ENCODE measurements at regions of chr5 and their contacts with region 1.

Region 1: DNA sequence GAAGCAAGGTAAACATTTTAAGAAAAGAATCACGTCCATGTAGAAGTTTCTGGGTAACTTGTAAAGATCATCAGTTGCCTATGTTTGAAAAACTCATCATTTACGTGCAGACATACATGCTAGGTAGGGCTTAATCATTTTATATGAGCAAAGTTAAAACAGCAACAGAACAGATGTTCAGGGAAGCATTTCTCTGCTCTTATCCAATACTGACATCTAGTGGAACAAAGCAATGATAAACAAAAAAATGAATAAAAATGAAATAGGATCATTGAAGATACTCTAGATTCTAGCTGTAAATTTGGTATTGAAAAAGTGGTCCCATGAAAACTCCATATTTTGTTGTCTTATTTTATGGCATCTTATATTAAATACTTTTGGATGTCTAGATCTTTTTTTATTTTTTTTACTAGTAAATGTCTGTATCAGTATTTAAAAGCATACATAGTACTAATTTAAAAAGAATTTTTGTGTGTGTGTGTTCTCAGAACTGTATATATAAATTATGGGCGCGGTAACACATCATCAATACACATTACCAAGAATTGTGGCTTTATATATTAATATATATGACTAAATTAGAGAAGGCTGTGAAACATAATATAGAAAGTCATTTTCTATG is 1050.2 kb downstream of the CDH12 start:
- DNase-seq: peak; percentile 18
- ATAC-seq: peak; percentile 67
- H3K4me3 ChIP-seq: no peak overlapping the region
- H3K27ac ChIP-seq: no peak overlapping the region
- H3K4me1 ChIP-seq: no peaks in the 10 kb centered on the region
- H3K27me3 ChIP-seq: no peaks in the 10 kb centered on the region
- CTCF ChIP-seq: peak; percentile 65
- EP300 ChIP-seq: no peak
- POLR2A ChIP-seq: no peak
- RAD21 ChIP-seq: 0 out of 2 replicates have a peak, but pooled peaks have one; percentile 46

Region 2: DNA sequence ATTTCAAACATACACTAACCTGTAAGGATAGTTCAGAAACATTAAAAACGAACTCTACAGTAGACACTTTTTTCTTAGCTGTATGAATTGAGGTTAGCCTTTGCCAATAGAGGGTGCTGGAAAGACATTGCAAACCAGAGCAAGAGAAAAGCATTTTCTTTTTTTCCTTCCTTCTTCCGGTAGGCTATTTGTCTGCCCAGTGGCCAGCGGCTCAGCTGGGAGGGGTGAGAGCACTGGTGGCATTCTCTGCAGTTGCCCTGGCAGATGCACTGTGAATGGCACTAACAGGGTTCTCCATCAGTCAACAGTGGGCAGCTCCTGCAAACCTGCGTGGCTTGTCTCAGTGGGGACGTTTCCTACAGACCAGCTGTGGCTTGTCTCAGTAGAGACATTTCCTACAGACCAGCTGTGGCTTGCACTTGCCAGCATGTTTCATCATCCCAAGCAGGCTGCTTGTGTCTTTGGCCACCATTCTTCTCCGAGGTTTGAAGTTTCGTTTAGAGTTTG is 830.5 kb before region 1 on chr5:
- CTCF ChIA-PET with region 1: no interaction called
- POLR2A ChIA-PET with region 1: no interaction called
- in situ Hi-C with region 1: no loop called
- intact Hi-C with region 1: loop called (anchors 10 kb)
- DNase-seq: peak; percentile 3
- ATAC-seq: peak; percentile 85
- H3K4me3 ChIP-seq: peak overlapping the region in 1 of 3 experiments; percentile 25; a peak in 2 of 6 replicates
- H3K27ac ChIP-seq: no peak overlapping the region
- H3K4me1 ChIP-seq: no peaks in the 10 kb centered on the region
- H3K27me3 ChIP-seq: no peaks in the 10 kb centered on the region
- CTCF ChIP-seq: peak; percentile 26; the same call in 1 of the 2 replicates
- EP300 ChIP-seq: no peak
- POLR2A ChIP-seq: no peak
- RAD21 ChIP-seq: no peak

Region 3: GRCh38 chr5:21680196-21680595 is 122.8 kb before region 1 on chr5:
- CTCF ChIA-PET with region 1: no interaction called
- POLR2A ChIA-PET with region 1: no interaction called
- in situ Hi-C with region 1: no loop called
- intact Hi-C with region 1: no loop called
- DNase-seq: no peak
- ATAC-seq: no peak
- H3K4me3 ChIP-seq: no peak overlapping the region
- H3K27ac ChIP-seq: no peak overlapping the region
- H3K4me1 ChIP-seq: no peaks in the 10 kb centered on the region
- H3K27me3 ChIP-seq: no peaks in the 10 kb centered on the region
- CTCF ChIP-seq: no peak
- EP300 ChIP-seq: no peak
- POLR2A ChIP-seq: no peak
- RAD21 ChIP-seq: no peak

Region 4: GRCh38 chr5:21765406-21765805 is 37.6 kb before region 1 on chr5:
- CTCF ChIA-PET with region 1: no interaction called
- POLR2A ChIA-PET with region 1: no interaction called
- in situ Hi-C with region 1: no loop called
- intact Hi-C with region 1: no loop called
- DNase-seq: no peak
- ATAC-seq: no peak
- H3K4me3 ChIP-seq: no peak overlapping the region
- H3K27ac ChIP-seq: no peak overlapping the region
- H3K4me1 ChIP-seq: no peaks in the 10 kb centered on the region
- H3K27me3 ChIP-seq: no peaks in the 10 kb centered on the region
- CTCF ChIP-seq: no peak
- EP300 ChIP-seq: no peak
- POLR2A ChIP-seq: no peak
- RAD21 ChIP-seq: no peak

Measured in HepG2 (cell line).